GM10248 (cell line): ENCODE measurements at regions of chr5 and their contacts with region 1.

Region 1: GRCh38 chr5:109145139-109145538 is 264.6 kb downstream of the PJA2 start:
- DNase-seq: no peak
- CTCF ChIP-seq: no peak

Region 2: DNA sequence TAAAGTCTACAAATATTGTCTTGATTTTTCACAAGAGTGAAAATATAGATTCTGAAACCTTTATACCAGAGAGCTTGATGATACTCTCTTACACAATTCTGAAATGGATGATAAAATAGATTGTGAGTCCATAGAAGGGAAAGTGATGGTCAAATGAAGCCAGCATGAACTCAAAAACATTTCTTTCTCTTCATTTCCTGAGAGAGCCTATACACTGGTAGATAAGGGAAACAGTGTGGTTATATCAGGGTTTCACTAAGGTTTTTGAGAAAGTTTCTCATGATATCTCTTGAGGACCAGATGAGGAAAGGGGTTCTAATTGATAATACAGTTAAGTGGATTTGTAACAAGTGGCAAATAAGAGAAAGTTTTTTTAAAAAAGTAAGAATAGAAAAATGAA is 10.5 kb after region 1 on chr5:
- CTCF ChIA-PET with region 1: interaction called, 10 read pairs
- POLR2A ChIA-PET with region 1: no interaction called
- DNase-seq: no peak
- CTCF ChIP-seq: no peak